OCI-LY7 (cell line): ENCODE measurements at regions of chr20 and their contacts with region 1.

Region 1: GRCh38 chr20:19784511-19785172 is 26.6 kb downstream of the RIN2 start:
- DNase-seq: peak; percentile 59
- H3K4me3 ChIP-seq: no peak overlapping the region
- H3K27ac ChIP-seq: no peak overlapping the region
- H3K4me1 ChIP-seq: no peaks in the 10 kb centered on the region
- CTCF ChIP-seq: peak; percentile 85

Region 2: GRCh38 chr20:19757487-19758132 is 27.0 kb before region 1 on chr20:
- CTCF ChIA-PET with region 1: no interaction called
- POLR2A ChIA-PET with region 1: no interaction called
- intact Hi-C with region 1: no loop called
- DNase-seq: no peak
- H3K4me3 ChIP-seq: no peak overlapping the region
- H3K27ac ChIP-seq: no peak overlapping the region
- H3K4me1 ChIP-seq: no peaks in the 10 kb centered on the region
- CTCF ChIP-seq: no peak

Region 3: GRCh38 chr20:19828232-19828631 is 43.6 kb after region 1 on chr20:
- CTCF ChIA-PET with region 1: no interaction called
- POLR2A ChIA-PET with region 1: interaction called, 3 read pairs
- intact Hi-C with region 1: loop called (anchors 1 kb)
- DNase-seq: peak; percentile 23
- H3K4me3 ChIP-seq: no peak overlapping the region
- H3K27ac ChIP-seq: no peak overlapping the region
- H3K4me1 ChIP-seq: peaks cover 7% of the 10 kb centered on the region
- CTCF ChIP-seq: peak; percentile 41

Region 4: DNA sequence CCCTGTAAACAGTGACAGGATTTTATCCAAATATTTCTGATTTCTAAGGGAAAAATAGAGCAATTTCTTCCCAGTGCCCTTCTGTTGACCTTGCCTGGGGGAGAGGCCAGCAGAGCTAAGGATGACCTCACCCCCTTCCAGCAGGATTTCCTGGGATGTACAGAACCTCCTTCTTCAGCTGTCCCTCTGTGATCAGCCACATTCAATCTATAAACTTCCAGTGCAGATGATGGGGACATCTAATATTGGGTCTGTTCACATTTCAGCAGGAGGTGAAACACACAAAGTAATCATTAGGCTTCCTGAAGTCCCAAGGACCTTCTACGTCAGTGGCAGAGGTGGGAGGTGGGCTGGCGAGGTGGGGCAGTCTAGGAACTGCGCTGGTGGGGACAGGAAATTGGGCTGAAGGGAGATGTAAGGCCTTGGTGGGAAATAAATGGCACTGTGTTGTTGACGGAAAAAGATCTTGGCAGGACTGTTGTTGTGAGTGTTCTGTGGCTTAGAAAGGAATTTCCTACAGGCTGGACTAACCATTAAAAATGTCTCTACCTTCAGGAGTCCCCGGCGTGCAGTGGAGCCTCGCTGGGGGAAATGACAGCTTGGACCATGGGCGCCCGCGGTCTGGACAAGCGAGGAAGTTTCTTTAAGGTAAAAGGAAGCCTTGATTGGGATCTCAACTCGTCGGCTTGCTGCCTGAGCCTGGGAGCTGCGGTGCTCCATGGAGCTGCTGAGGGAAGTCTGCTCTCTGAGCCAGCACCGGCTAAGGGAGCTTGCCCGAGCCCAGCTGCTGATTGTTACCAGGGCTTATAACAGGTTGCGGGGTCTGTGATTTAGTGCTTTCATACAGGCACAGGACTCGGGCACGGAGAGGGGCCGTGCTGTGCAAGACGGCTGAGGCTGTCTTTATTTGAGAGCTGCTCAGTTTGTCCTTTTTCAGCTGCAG is 104.6 kb after region 1 on chr20:
- CTCF ChIA-PET with region 1: no interaction called
- POLR2A ChIA-PET with region 1: no interaction called
- intact Hi-C with region 1: loop called (anchors 5 kb)
- DNase-seq: no peak
- H3K4me3 ChIP-seq: no peak overlapping the region
- H3K27ac ChIP-seq: no peak overlapping the region
- H3K4me1 ChIP-seq: no peaks in the 10 kb centered on the region
- CTCF ChIP-seq: no peak

Region 5: GRCh38 chr20:19995220-19995863 is 210.7 kb after region 1 on chr20:
- CTCF ChIA-PET with region 1: interaction called, 4 read pairs
- POLR2A ChIA-PET with region 1: interaction called, 5 read pairs
- intact Hi-C with region 1: loop called (anchors 1 kb)
- DNase-seq: peak; percentile 57
- H3K4me3 ChIP-seq: no peak overlapping the region
- H3K27ac ChIP-seq: no peak overlapping the region
- H3K4me1 ChIP-seq: no peaks in the 10 kb centered on the region
- CTCF ChIP-seq: peak; percentile 94

Region 6: DNA sequence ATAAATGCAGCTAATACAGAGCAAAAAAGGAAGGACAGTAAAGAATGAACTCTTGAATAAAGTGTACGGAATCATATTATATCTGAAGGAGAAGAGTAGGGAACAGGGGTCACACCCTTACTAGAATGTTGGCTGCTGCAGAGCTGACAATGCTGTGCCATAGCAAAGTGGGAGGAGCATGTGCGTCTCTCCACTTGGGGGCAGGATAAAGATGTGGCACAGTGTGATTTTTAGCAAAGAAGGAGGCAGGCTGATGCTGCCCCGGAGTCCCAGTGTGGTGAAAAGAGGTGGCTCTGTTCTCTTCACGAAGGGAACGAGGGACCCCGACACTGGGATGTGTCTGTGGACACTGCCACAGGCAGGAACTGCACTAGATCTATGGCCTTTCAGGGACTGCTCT is 650.8 kb after region 1 on chr20:
- CTCF ChIA-PET with region 1: no interaction called
- POLR2A ChIA-PET with region 1: no interaction called
- intact Hi-C with region 1: no loop called
- DNase-seq: no peak
- H3K4me3 ChIP-seq: no peak overlapping the region
- H3K27ac ChIP-seq: no peak overlapping the region
- H3K4me1 ChIP-seq: no peaks in the 10 kb centered on the region
- CTCF ChIP-seq: peak; percentile 32